CD4-positive, alpha-beta memory T cell (primary cell): ENCODE measurements at regions of chr14 and their contacts with region 1.

Region 1: GRCh38 chr14:55354500-55354899 is 57.1 kb downstream of the ATG14 start:
- DNase-seq: peak; percentile 76 to 87 (median 79)
- H3K4me3 ChIP-seq: peak overlapping the region in 1 of 2 donors; percentile 35
- H3K4me3 Mint-ChIP-seq: peak overlapping the region; percentile 67 to 92 (median 83)
- H3K27ac ChIP-seq: peak overlapping the region; percentile 62
- H3K27ac Mint-ChIP-seq: peak overlapping the region; percentile 92 to 98 (median 96)
- H3K4me1 ChIP-seq: peaks cover 36% of the 10 kb centered on the region
- H3K4me1 Mint-ChIP-seq: peaks cover 24 to 39% (median 30%) of the 10 kb centered on the region in 4 donors
- H3K27me3 ChIP-seq: no peaks in the 10 kb centered on the region
- H3K27me3 Mint-ChIP-seq: no peaks in the 10 kb centered on the region

Region 2: DNA sequence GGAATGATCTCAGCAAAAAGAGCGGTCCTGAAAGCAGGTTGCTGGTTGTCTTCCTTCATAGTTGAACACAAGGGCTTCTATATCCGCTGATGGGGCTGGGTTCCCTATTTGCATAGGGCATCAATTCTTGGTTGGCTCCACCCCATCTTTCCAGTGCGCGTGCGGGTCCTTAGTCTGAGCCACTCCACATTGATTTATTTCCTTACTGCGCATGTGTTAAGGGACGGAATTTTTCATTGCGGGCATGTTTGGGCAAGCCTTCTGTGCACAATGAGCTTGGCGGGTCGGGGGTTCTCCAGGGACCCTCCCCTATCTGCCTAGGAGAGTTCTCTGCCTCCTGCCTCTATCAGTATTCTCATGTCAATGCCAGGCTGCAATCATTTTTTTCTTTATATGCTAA is 141.9 kb before region 1 on chr14:
- CTCF ChIA-PET with region 1: interaction called, 13 read pairs
- POLR2A ChIA-PET with region 1: interaction called, 12 read pairs
- intact Hi-C with region 1: loop called (anchors 1 kb)
- DNase-seq: no peak
- H3K4me3 ChIP-seq: no peak overlapping the region
- H3K4me3 Mint-ChIP-seq: no peak overlapping the region
- H3K27ac ChIP-seq: no peak overlapping the region
- H3K27ac Mint-ChIP-seq: no peak overlapping the region
- H3K4me1 ChIP-seq: no peaks in the 10 kb centered on the region
- H3K4me1 Mint-ChIP-seq: peaks cover 0 to 5% (median 2%) of the 10 kb centered on the region in 4 donors
- H3K27me3 ChIP-seq: no peaks in the 10 kb centered on the region
- H3K27me3 Mint-ChIP-seq: peaks cover 0 to 1% of the 10 kb centered on the region in 2 donors

Region 3: GRCh38 chr14:55297611-55298441 is 56.7 kb before region 1 on chr14:
- CTCF ChIA-PET with region 1: interaction called, 19 read pairs
- POLR2A ChIA-PET with region 1: no interaction called
- intact Hi-C with region 1: no loop called
- DNase-seq: peak in 4 of 5 donors; percentile 19 to 40 (median 28)
- H3K4me3 ChIP-seq: no peak overlapping the region
- H3K4me3 Mint-ChIP-seq: peak overlapping the region in 6 of 8 donors; percentile 4 to 70 (median 54)
- H3K27ac ChIP-seq: no peak overlapping the region
- H3K27ac Mint-ChIP-seq: peak overlapping the region in 5 of 7 donors; percentile 12 to 58 (median 33)
- H3K4me1 ChIP-seq: peaks cover 45% of the 10 kb centered on the region
- H3K4me1 Mint-ChIP-seq: peaks cover 46 to 82% (median 64%) of the 10 kb centered on the region in 4 donors
- H3K27me3 ChIP-seq: no peaks in the 10 kb centered on the region
- H3K27me3 Mint-ChIP-seq: no peaks in the 10 kb centered on the region

Region 4: DNA sequence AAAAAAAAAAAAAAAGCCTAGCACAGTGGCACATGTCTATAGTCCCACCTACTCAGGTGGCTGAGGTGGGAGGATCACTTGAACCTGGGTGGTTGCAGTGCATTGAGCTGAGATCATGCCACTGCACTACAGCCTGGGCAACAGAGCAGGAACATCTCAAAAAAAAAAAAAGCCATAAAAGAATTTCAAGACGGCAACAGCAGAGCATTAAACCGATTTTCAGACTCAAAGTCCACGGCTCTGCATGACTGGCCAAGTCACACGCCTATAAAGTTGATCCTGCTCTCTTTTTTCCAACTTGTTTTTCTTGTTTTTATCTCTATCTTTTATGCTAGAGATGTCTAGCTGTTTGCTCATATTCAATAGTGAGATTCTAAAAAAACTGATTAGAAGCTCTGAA is 37.9 kb before region 1 on chr14:
- CTCF ChIA-PET with region 1: interaction called, 4 read pairs
- POLR2A ChIA-PET with region 1: no interaction called
- intact Hi-C with region 1: loop called (anchors 5 kb)
- DNase-seq: no peak
- H3K4me3 ChIP-seq: no peak overlapping the region
- H3K4me3 Mint-ChIP-seq: no peak overlapping the region
- H3K27ac ChIP-seq: no peak overlapping the region
- H3K27ac Mint-ChIP-seq: no peak overlapping the region
- H3K4me1 ChIP-seq: no peaks in the 10 kb centered on the region
- H3K4me1 Mint-ChIP-seq: peaks cover 10 to 20% (median 19%) of the 10 kb centered on the region in 4 donors
- H3K27me3 ChIP-seq: no peaks in the 10 kb centered on the region
- H3K27me3 Mint-ChIP-seq: no peaks in the 10 kb centered on the region

Region 5: DNA sequence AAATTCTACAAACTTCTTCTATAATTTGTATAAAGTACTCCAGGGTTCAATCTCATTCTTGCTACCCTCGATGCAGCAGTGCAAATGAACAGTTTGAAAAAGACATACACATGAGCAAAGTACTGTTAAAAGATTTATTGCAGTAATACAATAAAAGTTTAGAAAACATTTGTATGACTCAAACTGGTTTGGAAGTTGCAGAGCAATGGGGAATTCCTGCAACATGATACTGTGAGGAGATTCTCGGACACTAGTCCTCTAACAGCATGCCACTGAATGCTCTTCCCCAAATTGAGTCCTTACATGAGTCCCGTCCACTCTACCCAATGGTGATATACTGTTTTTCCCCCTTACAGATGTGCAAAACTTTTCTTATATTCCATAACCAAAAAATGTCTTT is 11.8 kb after region 1 on chr14:
- CTCF ChIA-PET with region 1: interaction called, 30 read pairs
- POLR2A ChIA-PET with region 1: interaction called, 3 read pairs
- intact Hi-C with region 1: no loop called
- DNase-seq: no peak
- H3K4me3 ChIP-seq: no peak overlapping the region
- H3K4me3 Mint-ChIP-seq: no peak overlapping the region
- H3K27ac ChIP-seq: no peak overlapping the region
- H3K27ac Mint-ChIP-seq: no peak overlapping the region
- H3K4me1 ChIP-seq: no peaks in the 10 kb centered on the region
- H3K4me1 Mint-ChIP-seq: peaks cover 4 to 17% (median 9%) of the 10 kb centered on the region in 4 donors
- H3K27me3 ChIP-seq: no peaks in the 10 kb centered on the region
- H3K27me3 Mint-ChIP-seq: no peaks in the 10 kb centered on the region